GM23248 (cell line): ENCODE measurements at regions of chr3 and their contacts with region 1.

Region 1: GRCh38 chr3:45929042-45929679 is 14.1 kb upstream of the CXCR6 start:
- DNase-seq: peak; percentile 64
- H3K4me3 ChIP-seq: no peak overlapping the region
- H3K27ac ChIP-seq: no peak overlapping the region
- H3K4me1 ChIP-seq: peaks cover 8% of the 10 kb centered on the region; the same call in 1 of the 2 replicates
- H3K27me3 ChIP-seq: no peaks in the 10 kb centered on the region

Region 2: GRCh38 chr3:45760878-45761711 is 168.1 kb before region 1 on chr3:
- in situ Hi-C with region 1: loop called (anchors 5 kb)
- DNase-seq: peak; percentile 79
- H3K4me3 ChIP-seq: no peak overlapping the region
- H3K27ac ChIP-seq: no peak overlapping the region
- H3K4me1 ChIP-seq: no peaks in the 10 kb centered on the region
- H3K27me3 ChIP-seq: peaks cover 18% of the 10 kb centered on the region